ENCODE measurements at regions of chr15 and their contacts with region 1.

Region 1: DNA sequence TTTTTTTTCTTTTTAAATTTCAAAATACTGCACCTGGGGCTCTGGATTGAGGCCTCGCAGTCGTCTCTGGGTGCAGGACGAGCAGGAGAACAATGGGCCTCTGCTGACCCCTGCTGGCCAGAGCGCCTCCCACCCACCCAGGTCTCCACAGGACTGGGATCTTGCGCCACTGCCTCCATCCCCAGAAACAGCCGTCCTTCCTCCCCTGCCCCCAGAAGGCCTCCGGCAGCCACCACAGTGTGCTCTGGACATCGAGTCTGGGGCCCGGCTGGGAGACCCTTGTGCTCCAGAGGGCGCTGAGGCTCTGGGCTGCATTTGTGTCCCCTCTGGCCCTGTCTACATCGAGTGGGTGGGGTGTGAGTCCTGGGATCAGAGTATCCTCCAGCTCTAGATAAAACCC is 6.6 kb upstream of the ACSBG1 start:
- DNase-seq: peak; percentile 89
- ATAC-seq: peak; percentile 98
- H3K4me3 Mint-ChIP-seq: no peak overlapping the region
- H3K27ac Mint-ChIP-seq: no peak overlapping the region
- H3K4me1 Mint-ChIP-seq: peaks cover 1% of the 10 kb centered on the region
- H3K27me3 Mint-ChIP-seq: peaks cover 1% of the 10 kb centered on the region
- CTCF ChIP-seq: peak; percentile 80

Region 2: DNA sequence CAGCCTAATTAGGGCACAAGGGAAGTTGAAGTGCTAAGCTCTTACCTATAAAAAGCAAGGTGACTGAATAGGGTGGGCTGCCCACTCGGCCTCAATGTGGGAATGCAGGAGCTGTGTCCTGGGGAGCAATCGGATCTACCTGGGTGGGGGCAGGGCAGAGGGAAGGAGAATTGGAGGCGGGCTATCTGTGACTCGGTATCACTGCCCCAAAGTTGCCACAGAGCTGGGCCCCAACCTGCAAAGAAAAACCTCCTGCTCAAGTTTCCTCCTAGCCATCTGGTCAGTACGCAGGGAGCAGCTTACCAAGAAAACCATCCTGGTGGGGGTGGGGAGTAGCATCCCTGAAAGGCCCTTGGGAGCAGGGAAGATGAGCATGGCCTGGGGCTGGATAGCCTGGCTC is 120.5 kb before region 1 on chr15:
- CTCF ChIA-PET with region 1: interaction called, 11 read pairs
- POLR2A ChIA-PET with region 1: no interaction called
- intact Hi-C with region 1: loop called (anchors 5 kb)
- DNase-seq: no peak
- ATAC-seq: no peak
- H3K4me3 Mint-ChIP-seq: no peak overlapping the region
- H3K27ac Mint-ChIP-seq: no peak overlapping the region
- H3K4me1 Mint-ChIP-seq: no peaks in the 10 kb centered on the region
- H3K27me3 Mint-ChIP-seq: no peaks in the 10 kb centered on the region
- CTCF ChIP-seq: no peak

Region 3: GRCh38 chr15:78140292-78140691 is 100.7 kb before region 1 on chr15:
- CTCF ChIA-PET with region 1: interaction called, 11 read pairs
- POLR2A ChIA-PET with region 1: interaction called, 3 read pairs
- intact Hi-C with region 1: no loop called
- DNase-seq: no peak
- ATAC-seq: no peak
- H3K4me3 Mint-ChIP-seq: no peak overlapping the region
- H3K27ac Mint-ChIP-seq: no peak overlapping the region
- H3K4me1 Mint-ChIP-seq: no peaks in the 10 kb centered on the region
- H3K27me3 Mint-ChIP-seq: no peaks in the 10 kb centered on the region
- CTCF ChIP-seq: no peak

Region 4: DNA sequence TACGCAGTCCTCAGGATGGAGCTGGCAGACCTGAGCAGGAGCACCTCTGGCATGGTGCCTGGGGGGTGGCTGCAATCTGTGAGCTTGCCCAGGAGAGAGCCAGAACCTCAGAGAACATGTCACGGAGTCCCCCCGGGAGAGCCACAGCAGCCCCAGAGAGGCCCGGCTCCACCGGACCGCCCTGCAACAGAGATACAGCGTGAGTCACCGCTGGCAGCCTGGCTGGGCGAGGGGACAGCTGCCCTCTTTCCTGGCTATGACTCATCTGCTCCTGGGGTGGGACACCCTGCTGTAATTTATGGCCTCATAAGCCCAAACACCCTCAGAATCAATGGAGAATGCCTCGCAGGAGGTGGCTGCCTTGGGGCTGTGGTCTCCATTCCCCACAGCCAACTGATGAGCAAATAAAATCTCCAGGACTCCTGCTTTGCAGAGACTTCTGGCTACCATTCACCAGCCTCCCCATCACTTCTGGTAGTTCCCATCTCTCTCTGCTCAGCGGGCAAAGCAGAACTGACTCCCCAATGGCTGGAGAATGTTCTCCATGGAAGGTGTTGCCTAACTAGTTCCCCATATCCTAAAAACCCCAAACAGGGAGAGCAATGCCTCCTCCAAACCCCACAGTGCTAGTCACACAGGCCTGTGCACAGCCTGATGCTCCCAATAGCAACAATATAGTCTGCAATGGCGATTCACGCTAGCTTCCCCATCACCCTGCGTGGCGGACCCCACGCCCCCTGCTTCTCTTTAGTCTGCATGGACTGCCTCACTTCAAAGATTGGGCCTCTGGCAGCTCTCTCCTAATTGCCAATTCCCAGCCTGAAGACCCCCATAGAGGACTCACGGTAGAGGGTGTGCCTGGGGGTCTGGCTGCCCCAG is 28.2 kb before region 1 on chr15:
- CTCF ChIA-PET with region 1: interaction called, 19 read pairs
- POLR2A ChIA-PET with region 1: no interaction called
- intact Hi-C with region 1: no loop called
- DNase-seq: no peak
- ATAC-seq: no peak
- H3K4me3 Mint-ChIP-seq: no peak overlapping the region
- H3K27ac Mint-ChIP-seq: no peak overlapping the region
- H3K4me1 Mint-ChIP-seq: no peaks in the 10 kb centered on the region
- H3K27me3 Mint-ChIP-seq: peaks cover 4% of the 10 kb centered on the region
- CTCF ChIP-seq: no peak

Region 5: GRCh38 chr15:78264304-78265136 is 23.5 kb after region 1 on chr15 and contains the start of gene DNAJA4:
- CTCF ChIA-PET with region 1: interaction called, 12 read pairs
- POLR2A ChIA-PET with region 1: no interaction called
- intact Hi-C with region 1: no loop called
- DNase-seq: peak; percentile 69
- ATAC-seq: peak; percentile 71
- H3K4me3 Mint-ChIP-seq: peak within 1 kb of the TSS; percentile 89
- H3K27ac Mint-ChIP-seq: peak within 1 kb of the TSS; percentile 91
- H3K4me1 Mint-ChIP-seq: peaks cover 27% of the 10 kb centered on the region
- H3K27me3 Mint-ChIP-seq: no peaks in the 10 kb centered on the region
- CTCF ChIP-seq: no peak
- total RNA-seq, gene DNAJA4: 38.1 to 38.8 TPM